B cell (primary cell): ENCODE measurements at regions of chr1 and their contacts with region 1.

Region 1: DNA sequence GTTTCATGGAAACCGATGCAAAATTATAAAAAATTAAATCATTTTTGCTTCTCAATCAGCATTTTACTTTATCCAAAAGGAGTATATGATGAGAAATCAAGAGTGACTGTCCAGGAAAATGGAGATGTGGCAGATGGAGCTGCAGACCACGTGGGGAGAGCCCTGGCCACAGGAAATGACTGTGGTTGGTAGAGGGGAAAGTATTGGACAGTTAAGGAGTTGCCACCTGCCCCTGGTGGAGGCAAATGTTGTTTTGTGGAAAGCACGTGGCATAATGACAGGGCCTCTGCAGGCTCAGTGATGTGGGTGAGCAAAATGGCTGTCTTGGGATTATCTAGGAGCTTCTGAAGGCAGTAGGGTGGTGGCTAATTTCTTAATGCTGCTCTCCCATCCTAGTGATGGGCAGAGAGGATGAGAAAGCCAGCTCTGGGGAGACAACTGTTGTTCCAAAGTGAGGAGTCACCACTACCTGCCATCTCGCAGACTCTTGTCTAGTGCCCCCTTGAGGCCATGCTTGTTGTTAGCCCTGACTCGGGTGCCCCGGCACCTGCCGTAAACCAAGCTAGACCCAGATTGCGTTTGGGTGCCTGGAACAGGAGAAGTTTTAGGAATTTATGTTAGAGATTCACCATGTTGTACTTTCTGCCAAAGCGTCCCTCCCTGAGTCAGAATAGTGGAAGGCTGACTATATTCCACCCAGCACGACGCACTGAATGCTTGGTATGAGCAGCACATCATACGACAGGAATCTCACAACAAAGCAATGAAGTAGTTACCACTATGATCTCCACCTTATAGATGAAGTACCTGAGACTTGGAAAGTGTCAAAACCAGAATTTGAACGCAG is 144.0 kb downstream of the ROR1 start:
- DNase-seq: peak; percentile 29
- ATAC-seq: no peak
- H3K4me3 ChIP-seq: no peak overlapping the region
- H3K4me3 Mint-ChIP-seq: no peak overlapping the region
- H3K27ac ChIP-seq: no peak overlapping the region
- H3K27ac Mint-ChIP-seq: no peak overlapping the region
- H3K4me1 ChIP-seq: no peaks in the 10 kb centered on the region
- H3K4me1 Mint-ChIP-seq: no peaks in the 10 kb centered on the region
- H3K27me3 ChIP-seq: no peaks in the 10 kb centered on the region
- H3K27me3 Mint-ChIP-seq: peaks cover 15% of the 10 kb centered on the region
- CTCF ChIP-seq: no peak

Region 2: DNA sequence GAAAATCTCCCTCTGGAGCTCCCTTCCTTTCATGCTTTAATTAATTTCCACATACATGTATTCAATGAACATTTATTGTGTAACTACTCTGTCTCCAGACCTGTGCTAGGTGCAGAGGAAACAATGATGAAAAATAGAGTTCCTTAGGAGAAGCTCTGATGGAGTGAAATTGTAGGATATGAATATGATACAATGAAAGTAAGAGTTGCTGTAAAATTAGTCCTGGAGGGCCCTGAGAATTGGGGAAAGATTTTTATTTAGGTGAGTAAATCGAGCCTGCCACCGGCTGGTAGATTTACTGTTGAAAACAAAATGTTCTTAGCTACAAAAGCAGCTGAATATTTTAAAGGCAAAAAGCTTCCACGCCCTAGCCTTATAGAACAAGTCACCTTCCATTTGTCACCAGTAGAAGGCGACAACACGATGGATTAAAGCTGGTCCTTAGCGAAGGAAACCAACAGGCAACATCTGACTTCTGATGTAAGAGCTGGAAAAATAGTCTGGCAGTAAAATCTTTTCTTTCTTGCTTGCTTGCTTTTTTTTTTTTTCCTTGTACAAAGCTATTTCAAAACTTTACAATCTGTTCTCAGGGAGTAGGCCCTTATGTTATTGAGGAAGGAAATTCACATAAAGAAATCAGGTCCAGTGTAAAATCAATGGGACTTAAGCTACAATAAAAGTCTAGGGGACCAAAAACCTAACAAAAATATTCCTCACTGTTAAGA is 225.9 kb before region 1 on chr1:
- CTCF ChIA-PET with region 1: interaction called, 153 read pairs
- POLR2A ChIA-PET with region 1: interaction called, 4 read pairs
- intact Hi-C with region 1: loop called (anchors 1 kb)
- DNase-seq: peak; percentile 64
- ATAC-seq: peak; percentile 61
- H3K4me3 ChIP-seq: no peak overlapping the region
- H3K4me3 Mint-ChIP-seq: no peak overlapping the region
- H3K27ac ChIP-seq: no peak overlapping the region
- H3K27ac Mint-ChIP-seq: no peak overlapping the region
- H3K4me1 ChIP-seq: no peaks in the 10 kb centered on the region
- H3K4me1 Mint-ChIP-seq: no peaks in the 10 kb centered on the region
- H3K27me3 ChIP-seq: peaks cover 0 to 3% (median 0%) of the 10 kb centered on the region in 4 experiments
- H3K27me3 Mint-ChIP-seq: peaks cover 1% of the 10 kb centered on the region
- CTCF ChIP-seq: peak; percentile 83

Region 3: GRCh38 chr1:63779338-63780211 is 138.2 kb before region 1 on chr1:
- CTCF ChIA-PET with region 1: interaction called, 40 read pairs
- POLR2A ChIA-PET with region 1: no interaction called
- intact Hi-C with region 1: no loop called
- DNase-seq: no peak
- ATAC-seq: no peak
- H3K4me3 ChIP-seq: no peak overlapping the region
- H3K4me3 Mint-ChIP-seq: no peak overlapping the region
- H3K27ac ChIP-seq: no peak overlapping the region
- H3K27ac Mint-ChIP-seq: no peak overlapping the region
- H3K4me1 ChIP-seq: peaks cover 7% of the 10 kb centered on the region in 2 donors
- H3K4me1 Mint-ChIP-seq: peaks cover 9% of the 10 kb centered on the region
- H3K27me3 ChIP-seq: peaks cover 0 to 8% (median 2%) of the 10 kb centered on the region in 4 experiments
- H3K27me3 Mint-ChIP-seq: peaks cover 42% of the 10 kb centered on the region
- CTCF ChIP-seq: no peak

Region 4: GRCh38 chr1:63868268-63868781 is 49.5 kb before region 1 on chr1:
- CTCF ChIA-PET with region 1: interaction called, 3 read pairs
- POLR2A ChIA-PET with region 1: no interaction called
- intact Hi-C with region 1: loop called (anchors 5 kb)
- DNase-seq: no peak
- ATAC-seq: no peak
- H3K4me3 ChIP-seq: no peak overlapping the region
- H3K4me3 Mint-ChIP-seq: no peak overlapping the region
- H3K27ac ChIP-seq: no peak overlapping the region
- H3K27ac Mint-ChIP-seq: no peak overlapping the region
- H3K4me1 ChIP-seq: no peaks in the 10 kb centered on the region
- H3K4me1 Mint-ChIP-seq: no peaks in the 10 kb centered on the region
- H3K27me3 ChIP-seq: no peaks in the 10 kb centered on the region
- H3K27me3 Mint-ChIP-seq: peaks cover 3% of the 10 kb centered on the region
- CTCF ChIP-seq: no peak

Region 5: DNA sequence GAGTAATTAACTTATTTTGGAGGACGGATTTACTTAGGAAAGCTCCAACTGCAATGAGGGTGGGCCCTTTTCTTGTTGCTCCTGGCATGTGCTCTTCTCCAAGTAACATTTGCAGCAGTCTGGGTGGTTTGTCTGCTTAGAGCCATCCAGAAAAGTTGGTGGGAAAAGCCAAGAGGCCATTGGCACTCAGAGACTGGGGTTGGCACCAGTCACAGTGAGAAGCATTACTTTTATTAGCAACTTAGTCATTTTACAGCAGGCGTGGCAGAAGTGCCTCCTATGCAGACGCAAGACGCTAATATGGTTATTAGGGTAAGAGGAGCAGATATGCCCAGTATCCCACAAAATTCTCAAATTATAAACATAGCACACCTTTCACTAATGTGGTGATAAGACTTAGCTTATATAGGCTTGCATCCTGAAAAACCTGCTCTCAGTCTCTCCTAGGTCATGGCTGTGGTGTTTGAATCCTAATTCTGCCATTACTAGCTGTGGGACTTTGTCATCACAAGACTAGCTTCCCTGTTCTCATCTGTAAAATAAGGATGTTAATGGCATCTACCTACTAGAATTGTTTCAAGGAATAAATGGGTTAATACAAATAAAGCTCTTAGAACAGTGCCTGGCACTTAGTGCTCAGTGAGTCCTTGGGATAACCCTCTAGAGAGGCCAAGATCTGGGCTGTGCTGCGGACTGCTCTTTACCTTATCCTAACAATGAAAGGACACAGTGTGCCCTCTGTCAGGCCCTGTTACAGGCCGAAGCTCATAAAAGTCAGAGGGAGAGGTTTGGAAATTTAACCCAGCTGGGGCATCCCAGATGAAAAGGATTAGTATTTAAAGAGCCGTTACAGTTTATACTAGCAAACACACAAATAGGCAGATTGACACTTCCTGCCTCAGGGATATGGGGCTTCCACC is 10.7 kb after region 1 on chr1:
- CTCF ChIA-PET with region 1: interaction called, 13 read pairs
- POLR2A ChIA-PET with region 1: no interaction called
- intact Hi-C with region 1: no loop called
- DNase-seq: no peak
- ATAC-seq: no peak
- H3K4me3 ChIP-seq: no peak overlapping the region
- H3K4me3 Mint-ChIP-seq: no peak overlapping the region
- H3K27ac ChIP-seq: no peak overlapping the region
- H3K27ac Mint-ChIP-seq: no peak overlapping the region
- H3K4me1 ChIP-seq: no peaks in the 10 kb centered on the region
- H3K4me1 Mint-ChIP-seq: no peaks in the 10 kb centered on the region
- H3K27me3 ChIP-seq: no peaks in the 10 kb centered on the region
- H3K27me3 Mint-ChIP-seq: no peaks in the 10 kb centered on the region
- CTCF ChIP-seq: no peak

Region 6: DNA sequence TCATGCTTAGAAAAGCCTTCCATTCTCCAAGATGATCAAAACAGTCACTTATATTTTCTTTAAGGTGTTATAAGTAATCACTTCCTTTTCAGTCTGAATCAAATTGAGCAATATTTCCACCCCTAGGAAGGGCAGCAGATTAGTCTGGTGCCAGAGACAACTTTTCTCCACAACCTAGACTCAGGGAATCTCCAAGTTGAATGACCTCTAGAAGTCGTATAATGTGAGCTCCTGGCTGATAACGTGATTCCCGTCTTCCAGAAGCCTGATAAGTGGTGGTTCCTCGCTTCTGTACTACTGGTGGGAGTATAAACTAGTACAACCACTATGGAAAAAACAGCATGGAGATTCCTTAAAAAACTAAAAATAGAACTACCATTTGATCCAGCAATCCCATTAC is 107.3 kb after region 1 on chr1:
- CTCF ChIA-PET with region 1: no interaction called
- POLR2A ChIA-PET with region 1: no interaction called
- intact Hi-C with region 1: no loop called
- DNase-seq: no peak
- ATAC-seq: no peak
- H3K4me3 ChIP-seq: no peak overlapping the region
- H3K4me3 Mint-ChIP-seq: no peak overlapping the region
- H3K27ac ChIP-seq: no peak overlapping the region
- H3K27ac Mint-ChIP-seq: no peak overlapping the region
- H3K4me1 ChIP-seq: peaks cover 0 to 2% of the 10 kb centered on the region in 2 donors
- H3K4me1 Mint-ChIP-seq: peaks cover under 1% of the 10 kb centered on the region
- H3K27me3 ChIP-seq: no peaks in the 10 kb centered on the region
- H3K27me3 Mint-ChIP-seq: no peaks in the 10 kb centered on the region
- CTCF ChIP-seq: no peak

Region 7: DNA sequence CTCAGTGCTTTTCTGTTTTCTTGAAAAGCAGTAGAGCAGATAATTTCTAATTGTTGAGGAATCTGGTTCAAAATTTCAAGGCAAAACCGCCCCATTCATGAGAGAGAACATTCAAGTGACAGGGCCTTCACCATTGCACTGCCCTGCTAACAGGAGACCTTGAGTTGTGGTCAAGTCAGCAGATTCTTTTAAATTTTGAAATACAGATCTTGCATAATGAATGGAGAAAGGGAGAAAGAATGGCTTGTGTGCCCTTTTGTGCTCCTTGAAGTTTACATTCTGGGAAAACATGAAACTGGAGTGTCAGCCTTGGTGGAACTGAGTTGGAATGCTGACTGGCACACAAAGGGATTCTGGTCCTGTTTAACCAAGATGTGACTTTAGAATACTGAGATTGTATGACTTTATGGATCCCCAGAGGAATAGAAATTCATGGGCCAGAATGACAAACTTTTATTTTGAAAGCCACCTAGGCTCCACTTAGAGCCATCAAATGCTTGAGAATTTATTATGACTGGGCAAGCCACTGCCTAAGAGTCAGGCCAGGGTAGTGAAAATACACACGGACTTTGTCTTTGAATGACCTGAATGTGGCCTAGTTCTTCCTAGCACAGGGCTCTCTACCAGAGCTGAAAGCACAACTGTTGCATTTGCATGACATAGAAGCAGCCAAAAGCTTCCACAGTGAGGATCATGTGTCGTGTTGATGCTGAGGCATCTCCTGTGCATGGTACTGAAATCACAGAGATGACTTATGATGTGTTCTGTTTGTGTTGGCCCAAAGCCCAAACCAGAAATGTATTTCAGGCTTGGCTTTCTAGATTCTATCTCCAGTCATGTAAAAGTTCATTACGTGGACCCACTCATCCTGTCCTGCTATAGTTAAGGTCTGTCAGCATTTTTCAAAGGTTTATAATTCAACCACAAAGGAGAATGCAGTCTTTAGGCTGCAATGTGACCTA is 121.5 kb after region 1 on chr1:
- CTCF ChIA-PET with region 1: no interaction called
- POLR2A ChIA-PET with region 1: no interaction called
- intact Hi-C with region 1: no loop called
- DNase-seq: no peak
- ATAC-seq: no peak
- H3K4me3 ChIP-seq: no peak overlapping the region
- H3K4me3 Mint-ChIP-seq: no peak overlapping the region
- H3K27ac ChIP-seq: no peak overlapping the region
- H3K27ac Mint-ChIP-seq: no peak overlapping the region
- H3K4me1 ChIP-seq: no peaks in the 10 kb centered on the region
- H3K4me1 Mint-ChIP-seq: no peaks in the 10 kb centered on the region
- H3K27me3 ChIP-seq: no peaks in the 10 kb centered on the region
- H3K27me3 Mint-ChIP-seq: peaks cover 9% of the 10 kb centered on the region
- CTCF ChIP-seq: no peak

Region 8: GRCh38 chr1:64242895-64243756 is 325.3 kb after region 1 on chr1:
- CTCF ChIA-PET with region 1: interaction called, 3 read pairs
- POLR2A ChIA-PET with region 1: no interaction called
- intact Hi-C with region 1: loop called (anchors 5 kb)
- DNase-seq: peak; percentile 21
- ATAC-seq: no peak
- H3K4me3 ChIP-seq: peak overlapping the region in 1 of 5 experiments; percentile 44
- H3K4me3 Mint-ChIP-seq: peak overlapping the region; percentile 60
- H3K27ac ChIP-seq: no peak overlapping the region
- H3K27ac Mint-ChIP-seq: no peak overlapping the region
- H3K4me1 ChIP-seq: peaks cover 9 to 13% of the 10 kb centered on the region in 2 donors
- H3K4me1 Mint-ChIP-seq: peaks cover 13% of the 10 kb centered on the region
- H3K27me3 ChIP-seq: peaks cover 0 to 13% (median 1%) of the 10 kb centered on the region in 4 experiments
- H3K27me3 Mint-ChIP-seq: peaks cover 19% of the 10 kb centered on the region
- CTCF ChIP-seq: peak; percentile 63

Region 9: GRCh38 chr1:64654519-64655341 is 736.9 kb after region 1 on chr1:
- CTCF ChIA-PET with region 1: no interaction called
- POLR2A ChIA-PET with region 1: no interaction called
- intact Hi-C with region 1: no loop called
- DNase-seq: no peak
- ATAC-seq: no peak
- H3K4me3 ChIP-seq: no peak overlapping the region
- H3K4me3 Mint-ChIP-seq: no peak overlapping the region
- H3K27ac ChIP-seq: no peak overlapping the region
- H3K27ac Mint-ChIP-seq: no peak overlapping the region
- H3K4me1 ChIP-seq: no peaks in the 10 kb centered on the region
- H3K4me1 Mint-ChIP-seq: no peaks in the 10 kb centered on the region
- H3K27me3 ChIP-seq: no peaks in the 10 kb centered on the region
- H3K27me3 Mint-ChIP-seq: peaks cover 23% of the 10 kb centered on the region
- CTCF ChIP-seq: no peak